PC-9 (cell line): ENCODE measurements at regions of chr10 and their contacts with region 1.

Region 1: DNA sequence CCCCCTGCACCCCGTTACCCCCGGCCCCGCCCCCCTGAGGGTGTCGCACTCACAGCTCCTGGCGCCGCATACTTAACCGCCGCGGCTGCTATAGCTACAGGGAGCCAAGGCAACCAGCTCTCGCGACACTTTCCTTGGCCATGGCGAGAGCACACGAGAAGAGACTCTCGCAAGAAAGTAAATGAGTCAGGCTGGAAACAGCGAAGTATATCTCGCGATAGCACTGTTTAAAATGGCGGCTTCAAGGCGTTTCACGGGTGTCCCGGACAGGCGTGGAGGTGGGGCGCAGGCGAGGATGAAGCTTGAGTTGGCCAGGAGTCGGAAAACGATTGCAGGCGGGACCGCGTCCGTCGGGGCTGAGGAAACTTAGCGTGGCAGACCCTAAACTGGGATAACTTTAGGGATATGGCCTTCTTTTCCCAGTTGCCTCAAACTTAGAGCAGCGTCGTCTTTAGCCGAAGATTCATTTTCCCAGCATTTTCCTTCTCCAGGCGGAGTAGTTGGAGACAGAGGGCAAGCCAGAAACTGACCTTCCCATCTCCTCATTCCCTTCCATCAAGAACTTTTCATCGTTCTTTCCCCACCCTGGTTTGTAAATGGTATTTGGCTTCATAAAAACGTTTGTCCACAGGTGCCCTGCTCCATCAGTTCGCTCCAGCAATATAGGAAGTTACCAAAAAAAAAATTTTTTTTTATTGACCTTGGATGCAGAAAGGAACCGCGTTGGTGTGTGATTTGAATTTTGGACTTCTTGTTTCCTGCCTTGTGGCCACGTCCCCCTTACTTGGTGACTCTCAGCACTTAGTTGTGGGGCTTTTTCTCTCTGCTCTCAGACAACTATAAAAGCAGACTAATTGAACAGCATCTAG is 15.2 kb downstream of the MYOZ1 start:
- DNase-seq: peak; percentile 94 to 97
- H3K4me3 ChIP-seq: peak overlapping the region; percentile 80
- H3K27ac ChIP-seq: peak overlapping the region; percentile 81
- H3K4me1 ChIP-seq: peaks cover 11% of the 10 kb centered on the region; the same call in 1 of the 2 replicates
- H3K27me3 ChIP-seq: no peaks in the 10 kb centered on the region
- CTCF ChIP-seq: no peak

Region 2: GRCh38 chr10:73529089-73529832 is 96.9 kb before region 1 on chr10:
- CTCF ChIA-PET with region 1: interaction called, 11 read pairs
- POLR2A ChIA-PET with region 1: interaction called, 3 read pairs
- intact Hi-C with region 1: loop called (anchors 1 kb)
- DNase-seq: peak; percentile 44 to 76
- H3K4me3 ChIP-seq: no peak overlapping the region
- H3K27ac ChIP-seq: no peak overlapping the region
- H3K4me1 ChIP-seq: no peaks in the 10 kb centered on the region
- H3K27me3 ChIP-seq: no peaks in the 10 kb centered on the region
- CTCF ChIP-seq: peak; percentile 96

Region 3: GRCh38 chr10:73552819-73553715 is 73.1 kb before region 1 on chr10:
- CTCF ChIA-PET with region 1: no interaction called
- POLR2A ChIA-PET with region 1: interaction called, 20 read pairs
- intact Hi-C with region 1: loop called (anchors 2 kb)
- DNase-seq: no peak
- H3K4me3 ChIP-seq: no peak overlapping the region
- H3K27ac ChIP-seq: no peak overlapping the region
- H3K4me1 ChIP-seq: no peaks in the 10 kb centered on the region
- H3K27me3 ChIP-seq: no peaks in the 10 kb centered on the region
- CTCF ChIP-seq: no peak

Region 4: DNA sequence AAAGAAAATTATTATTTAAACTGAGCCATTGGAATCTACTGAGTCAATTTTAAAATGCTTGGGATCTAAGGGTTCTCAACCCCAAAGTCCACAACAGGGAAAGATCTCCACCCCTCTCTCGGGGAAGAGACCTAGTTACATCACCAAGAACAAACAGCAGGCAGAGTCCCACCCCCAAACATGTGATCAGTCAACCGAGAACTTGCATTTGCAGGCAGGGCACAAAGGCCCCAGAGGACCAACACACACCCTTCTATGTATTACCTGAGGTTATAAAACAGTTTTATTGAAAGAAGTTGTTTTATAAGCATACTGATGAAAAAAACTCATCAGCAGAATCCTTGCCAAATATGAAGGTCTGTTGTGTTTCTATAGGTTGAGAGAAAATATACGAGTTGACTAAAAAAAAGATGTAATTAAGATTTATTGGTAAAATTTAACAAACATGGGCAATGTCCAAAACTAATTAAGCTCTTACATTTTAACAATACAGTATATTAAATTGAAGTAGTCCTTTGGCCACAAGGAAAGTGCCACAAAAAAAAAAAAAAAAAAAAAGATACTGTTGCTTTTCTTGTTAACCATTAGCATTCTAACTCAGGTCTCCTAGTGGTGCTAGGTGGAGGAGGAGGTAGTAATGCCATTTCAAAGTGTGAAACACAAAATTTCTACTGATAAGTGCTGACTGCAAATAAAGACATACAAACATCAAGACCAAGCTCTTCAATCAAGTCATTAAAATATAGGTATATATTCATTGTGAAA is 34.0 kb before region 1 on chr10:
- CTCF ChIA-PET with region 1: interaction called, 3 read pairs
- POLR2A ChIA-PET with region 1: interaction called, 8 read pairs
- intact Hi-C with region 1: loop called (anchors 1 kb)
- DNase-seq: peak; percentile 30 to 57
- H3K4me3 ChIP-seq: peak overlapping the region; percentile 28; the same call in 1 of the 2 replicates
- H3K27ac ChIP-seq: peak overlapping the region; percentile 84
- H3K4me1 ChIP-seq: peaks cover 60% of the 10 kb centered on the region
- H3K27me3 ChIP-seq: no peaks in the 10 kb centered on the region
- CTCF ChIP-seq: no peak

Region 5: DNA sequence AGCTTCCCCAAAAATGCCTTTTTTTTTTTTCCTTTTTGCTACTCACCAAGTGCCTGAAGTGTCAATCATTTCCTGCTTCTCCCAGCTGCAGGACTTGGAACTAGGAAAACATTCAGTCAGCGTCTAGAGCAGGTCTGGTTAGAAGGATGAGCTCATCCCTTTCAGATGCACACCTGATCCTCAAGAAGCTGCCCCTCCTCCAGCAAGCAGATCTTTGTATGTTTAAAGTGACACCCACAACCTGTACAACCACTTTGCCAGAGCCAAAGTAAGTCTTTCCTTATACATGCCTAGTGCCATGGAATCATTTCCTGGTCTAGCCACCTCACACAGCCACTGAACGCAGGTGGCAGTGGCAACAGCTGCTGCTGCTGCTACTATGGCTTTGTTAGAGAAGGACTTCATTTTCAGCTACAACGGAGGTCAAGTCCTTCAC is 24.6 kb before region 1 on chr10:
- CTCF ChIA-PET with region 1: interaction called, 3 read pairs
- POLR2A ChIA-PET with region 1: interaction called, 28 read pairs
- intact Hi-C with region 1: loop called (anchors 1 kb)
- DNase-seq: peak; percentile 86 to 100
- H3K4me3 ChIP-seq: peak overlapping the region; percentile 11; the same call in 1 of the 2 replicates
- H3K27ac ChIP-seq: peak overlapping the region; percentile 77
- H3K4me1 ChIP-seq: peaks cover 21% of the 10 kb centered on the region
- H3K27me3 ChIP-seq: no peaks in the 10 kb centered on the region
- CTCF ChIP-seq: no peak

Region 6: DNA sequence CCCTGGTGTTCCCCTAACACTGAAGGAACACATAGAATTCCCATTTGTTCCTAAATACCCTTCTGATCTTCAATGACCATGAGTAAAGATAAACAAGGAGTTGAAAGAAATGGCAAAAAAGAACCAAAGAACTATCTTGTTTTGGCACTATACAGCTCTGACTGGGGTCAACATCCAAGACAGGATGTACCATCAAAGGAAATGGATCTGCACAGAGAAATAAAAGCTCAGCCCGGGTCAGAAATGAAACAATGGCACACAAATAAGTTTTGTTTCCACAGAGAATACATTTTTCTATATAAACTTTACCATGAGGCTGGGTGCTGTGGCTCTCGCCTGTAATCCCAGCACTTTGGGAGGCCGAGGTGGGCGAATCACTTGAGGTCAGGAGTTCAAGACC is 17.0 kb before region 1 on chr10:
- CTCF ChIA-PET with region 1: interaction called, 10 read pairs
- POLR2A ChIA-PET with region 1: no interaction called
- intact Hi-C with region 1: no loop called
- DNase-seq: no peak
- H3K4me3 ChIP-seq: no peak overlapping the region
- H3K27ac ChIP-seq: no peak overlapping the region
- H3K4me1 ChIP-seq: no peaks in the 10 kb centered on the region
- H3K27me3 ChIP-seq: no peaks in the 10 kb centered on the region
- CTCF ChIP-seq: no peak

Region 7: GRCh38 chr10:73908853-73909538 is 282.9 kb after region 1 on chr10:
- CTCF ChIA-PET with region 1: no interaction called
- POLR2A ChIA-PET with region 1: interaction called, 12 read pairs
- intact Hi-C with region 1: no loop called
- DNase-seq: peak; percentile 77 to 100
- H3K4me3 ChIP-seq: peak overlapping the region; percentile 85; the same call in 1 of the 2 replicates
- H3K27ac ChIP-seq: peak overlapping the region; percentile 97
- H3K4me1 ChIP-seq: peaks cover 85% of the 10 kb centered on the region
- H3K27me3 ChIP-seq: no peaks in the 10 kb centered on the region
- CTCF ChIP-seq: no peak

Region 8: DNA sequence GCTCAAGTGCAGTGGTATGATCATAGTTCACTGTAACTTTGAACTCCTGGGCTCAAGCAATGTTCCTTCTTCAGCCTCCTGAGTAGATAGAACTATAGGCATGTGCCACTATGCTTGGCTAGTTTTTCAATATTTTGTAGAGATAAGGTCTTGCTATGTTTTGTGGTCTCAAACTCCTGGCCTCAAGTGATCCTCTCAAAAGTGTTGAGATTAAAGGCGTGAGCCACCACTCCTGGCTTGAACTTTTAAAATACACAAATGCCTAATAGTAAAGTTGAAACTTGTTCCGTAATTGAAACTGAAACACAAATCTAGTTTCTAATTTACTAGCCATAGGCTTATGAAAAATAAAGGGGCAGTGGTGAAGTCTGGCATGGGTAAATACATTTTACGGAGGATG is 458.8 kb after region 1 on chr10:
- CTCF ChIA-PET with region 1: no interaction called
- POLR2A ChIA-PET with region 1: no interaction called
- intact Hi-C with region 1: no loop called
- DNase-seq: no peak
- H3K4me3 ChIP-seq: no peak overlapping the region
- H3K27ac ChIP-seq: no peak overlapping the region
- H3K4me1 ChIP-seq: peaks cover 16% of the 10 kb centered on the region
- H3K27me3 ChIP-seq: no peaks in the 10 kb centered on the region
- CTCF ChIP-seq: no peak